Astrocyte of the cerebellum (primary cell): ENCODE measurements at regions of chr11 and their contacts with region 1.

Region 1: DNA sequence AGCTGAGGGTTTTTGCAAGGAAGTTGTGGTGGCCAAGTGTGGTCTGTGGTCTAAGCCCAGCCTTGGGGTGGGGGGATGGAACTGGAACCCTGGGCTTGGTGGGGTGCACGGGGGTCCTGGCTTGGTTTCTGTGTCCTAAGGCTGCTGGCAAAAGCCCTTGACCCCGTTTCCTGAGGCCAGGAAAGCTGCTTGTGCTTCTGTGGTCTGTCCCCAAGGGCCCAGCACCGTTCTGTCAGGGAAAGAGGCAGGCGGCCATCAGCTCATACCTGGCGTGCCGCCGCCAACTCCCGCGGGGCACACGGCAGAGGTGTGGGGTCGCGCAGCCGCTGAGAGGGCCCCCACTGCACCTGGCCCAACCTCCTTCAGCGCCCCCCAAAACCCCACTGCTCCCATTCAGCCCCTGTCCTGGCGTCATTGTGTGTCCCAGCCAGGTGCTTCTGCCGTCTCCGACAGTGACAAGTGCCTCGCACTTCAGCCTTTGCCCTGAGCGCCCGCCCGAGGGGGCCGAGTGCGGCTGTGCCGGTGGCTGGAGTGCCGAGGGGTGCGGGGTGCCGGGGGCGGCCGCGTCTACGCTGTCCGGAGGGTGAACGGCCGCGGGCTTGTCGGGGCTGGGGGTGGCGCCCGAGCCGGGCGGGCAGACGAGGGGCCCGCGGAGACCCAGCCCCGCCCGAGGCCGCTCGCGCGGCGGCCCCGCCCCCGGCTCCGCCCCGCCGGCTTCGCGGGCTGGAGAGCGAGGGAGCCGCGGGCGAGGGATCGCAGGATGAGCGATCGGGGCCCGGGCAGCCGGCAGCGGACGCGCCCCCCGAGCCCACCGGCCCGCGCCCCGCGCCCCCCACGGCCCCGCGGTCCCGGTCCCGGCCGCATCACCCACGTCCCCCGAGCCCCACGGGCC is at the start of gene CNIH2:
- DNase-seq: no peak
- H3K4me3 ChIP-seq: peak within 1 kb of the TSS; percentile 32
- CTCF ChIP-seq: no peak

Region 2: DNA sequence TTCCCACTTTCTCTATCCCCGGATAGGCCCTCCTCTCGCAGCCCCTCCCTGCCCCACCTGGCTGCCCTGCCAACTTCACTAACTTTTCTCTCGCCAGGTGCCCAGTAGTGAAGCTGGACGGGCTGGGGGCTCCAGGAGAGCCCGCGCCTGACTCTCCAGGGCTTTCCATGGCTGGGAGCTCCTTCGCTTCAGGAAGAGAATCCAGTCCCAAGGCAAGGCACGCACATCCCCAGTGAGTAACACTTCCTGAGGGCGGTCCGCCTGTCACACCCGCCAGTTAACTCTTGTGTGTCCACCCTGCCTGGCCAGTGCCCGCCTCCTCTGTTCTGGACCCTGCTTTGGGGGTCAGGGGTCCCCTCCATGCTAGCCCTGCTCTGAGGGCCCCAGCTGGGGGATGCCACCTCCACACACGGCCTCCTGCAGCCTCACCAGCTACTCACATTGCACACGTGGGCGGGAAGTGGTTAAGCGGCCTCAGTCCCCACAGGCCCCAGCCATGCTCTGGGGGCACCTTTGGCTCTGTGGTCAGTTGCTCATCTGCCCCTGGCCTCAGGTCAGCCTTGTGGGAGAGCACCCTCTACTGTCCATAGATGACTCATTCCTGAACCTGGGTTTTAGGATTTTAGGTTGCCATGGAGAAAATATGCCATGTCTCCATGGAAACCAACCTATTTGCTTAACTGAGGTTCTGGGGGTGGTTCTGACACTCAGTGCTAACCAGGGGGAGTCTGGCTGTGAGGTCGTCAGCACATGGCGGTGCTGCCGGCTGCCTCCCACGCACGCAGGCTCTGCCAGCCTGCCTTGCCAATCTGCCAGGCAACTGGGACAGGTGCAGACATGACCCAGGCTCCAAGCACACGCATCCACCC is 58.8 kb after region 1 on chr11 and contains the start of gene RIN1:
- in situ Hi-C with region 1: loop called (anchors 10 kb)
- DNase-seq: peak; percentile 94
- H3K4me3 ChIP-seq: peak within 1 kb of the TSS; percentile 77
- CTCF ChIP-seq: peak; percentile 29